ENCODE measurements at regions of chr12 and their contacts with region 1.

Region 1: GRCh38 chr12:57088459-57089248 is at the start of gene NAB2:
- DNase-seq: peak; percentile 97 to 98 (median 98)
- ATAC-seq: peak; percentile 77 to 87 (median 81)
- H3K4me3 ChIP-seq: peak within 1 kb of the TSS; percentile 52 to 97 (median 81)
- H3K27ac ChIP-seq: peak within 1 kb of the TSS; percentile 93 to 100 (median 99)
- H3K4me1 ChIP-seq: peaks cover 0 to 71% (median 44%) of the 10 kb centered on the region in 12 donors
- H3K27me3 ChIP-seq: no peaks in the 10 kb centered on the region
- CTCF ChIP-seq: no peak
- POLR2A ChIP-seq: peak in 1 of 2 donors; percentile 60
- total RNA-seq, gene NAB2: 8.7 to 20.3 (median 11.8) TPM

Region 2: GRCh38 chr12:57106021-57106708 is 17.5 kb after region 1 on chr12:
- intact Hi-C with region 1: loop called in 5 of 10 experiments (anchors 1 to 2 kb)
- DNase-seq: peak in 1 of 5 donors; percentile 36
- ATAC-seq: no peak
- H3K4me3 ChIP-seq: no peak overlapping the region
- H3K27ac ChIP-seq: no peak overlapping the region
- H3K4me1 ChIP-seq: peaks cover 0 to 32% (median 16%) of the 10 kb centered on the region in 12 donors
- H3K27me3 ChIP-seq: no peaks in the 10 kb centered on the region
- CTCF ChIP-seq: no peak
- POLR2A ChIP-seq: no peak